Natural killer cell (primary cell): ENCODE measurements at regions of chr1 and their contacts with region 1.

Region 1: DNA sequence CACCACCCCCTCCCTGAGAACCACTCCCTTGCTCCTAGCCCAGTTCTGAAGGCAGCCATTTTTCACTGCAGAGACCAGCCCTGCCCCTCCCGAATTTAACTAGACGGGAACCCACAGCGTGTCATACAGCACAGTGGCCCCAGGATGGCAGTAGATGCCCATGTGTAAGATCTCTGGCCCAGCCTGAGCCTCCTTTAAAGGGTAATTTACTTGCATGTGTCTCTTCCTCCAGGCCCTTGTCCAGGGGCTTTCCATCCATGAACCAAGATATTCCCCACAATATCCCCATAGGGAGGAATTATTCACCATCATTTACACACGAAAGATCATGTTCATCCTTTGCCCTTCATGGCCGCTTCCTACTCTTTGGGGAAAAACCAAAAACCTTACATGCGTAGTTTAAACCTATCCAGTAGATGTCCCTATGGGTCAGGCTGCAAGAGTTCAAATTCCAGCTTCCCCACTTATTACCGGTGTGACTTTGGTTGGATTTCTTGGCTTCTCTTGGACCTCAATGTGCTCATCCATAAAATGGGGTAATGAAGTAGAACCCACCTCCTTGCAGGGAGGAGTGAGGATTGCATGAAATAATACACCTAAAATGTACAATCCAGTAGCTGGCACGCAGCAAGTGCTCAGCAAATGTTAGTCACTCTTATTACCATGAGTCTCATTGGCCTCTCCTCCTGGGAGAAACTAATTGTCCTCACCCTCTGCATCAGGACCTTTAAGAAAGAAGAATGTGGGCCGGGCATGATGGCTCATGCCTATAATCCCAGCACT is 4.0 kb upstream of the LACTBL1 start:
- DNase-seq: peak; percentile 35 to 69
- ATAC-seq: peak; percentile 72 to 98 (median 96)
- H3K4me3 ChIP-seq: no peak overlapping the region
- H3K4me3 Mint-ChIP-seq: no peak overlapping the region
- H3K27ac ChIP-seq: no peak overlapping the region
- H3K27ac Mint-ChIP-seq: no peak overlapping the region
- H3K4me1 ChIP-seq: no peaks in the 10 kb centered on the region
- H3K4me1 Mint-ChIP-seq: no peaks in the 10 kb centered on the region
- H3K27me3 ChIP-seq: peaks cover 2% of the 10 kb centered on the region
- H3K27me3 Mint-ChIP-seq: peaks cover 15 to 28% of the 10 kb centered on the region in 2 donors
- CTCF ChIP-seq: no peak

Region 2: DNA sequence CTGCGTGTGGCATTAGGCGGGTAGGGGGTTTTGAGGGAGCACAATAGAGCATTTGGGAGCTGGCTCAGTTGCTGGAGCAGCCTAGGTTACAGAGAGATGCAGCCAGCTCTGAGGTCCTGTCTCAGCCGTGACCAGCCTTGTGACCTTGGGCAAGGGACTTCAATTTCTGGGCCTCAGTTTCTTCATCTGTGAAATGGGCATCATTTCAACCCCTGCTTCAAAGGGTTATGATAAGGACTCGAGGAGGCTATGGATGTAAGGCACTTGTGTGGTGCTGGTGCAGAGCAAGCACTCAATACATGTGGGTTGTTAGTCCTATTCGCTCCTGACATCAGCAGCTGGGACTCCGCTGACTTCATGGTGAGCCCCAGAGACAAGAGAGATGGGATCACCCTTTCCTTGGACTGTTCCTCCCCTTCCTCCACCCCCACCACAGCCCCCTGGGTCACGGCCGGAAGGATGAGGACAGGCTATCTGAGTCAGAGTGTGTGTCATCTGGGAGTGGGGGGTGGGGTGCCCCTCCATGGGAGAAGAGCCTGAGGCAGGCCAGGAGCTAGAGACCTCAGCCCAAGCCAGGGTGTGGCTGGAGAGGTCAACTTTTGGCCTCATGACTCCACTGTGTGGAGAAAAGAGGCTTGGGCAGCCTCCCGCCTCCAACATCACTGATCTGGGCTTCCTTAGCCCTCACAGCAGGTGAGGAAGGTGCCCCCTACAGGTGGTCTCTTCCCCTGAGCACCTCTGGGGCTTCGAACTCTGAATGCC is 596.4 kb before region 1 on chr1:
- intact Hi-C with region 1: no loop called
- DNase-seq: no peak
- ATAC-seq: no peak
- H3K4me3 ChIP-seq: no peak overlapping the region
- H3K4me3 Mint-ChIP-seq: no peak overlapping the region
- H3K27ac ChIP-seq: no peak overlapping the region
- H3K27ac Mint-ChIP-seq: no peak overlapping the region
- H3K4me1 ChIP-seq: no peaks in the 10 kb centered on the region
- H3K4me1 Mint-ChIP-seq: no peaks in the 10 kb centered on the region
- H3K27me3 ChIP-seq: no peaks in the 10 kb centered on the region
- H3K27me3 Mint-ChIP-seq: peaks cover 5 to 16% of the 10 kb centered on the region in 2 donors
- CTCF ChIP-seq: no peak

Region 3: GRCh38 chr1:23035823-23036452 is 59.3 kb after region 1 on chr1:
- intact Hi-C with region 1: no loop called
- DNase-seq: no peak
- ATAC-seq: no peak
- H3K4me3 ChIP-seq: no peak overlapping the region
- H3K4me3 Mint-ChIP-seq: no peak overlapping the region
- H3K27ac ChIP-seq: no peak overlapping the region
- H3K27ac Mint-ChIP-seq: no peak overlapping the region
- H3K4me1 ChIP-seq: no peaks in the 10 kb centered on the region
- H3K4me1 Mint-ChIP-seq: peaks cover 18 to 19% of the 10 kb centered on the region in 2 donors
- H3K27me3 ChIP-seq: no peaks in the 10 kb centered on the region
- H3K27me3 Mint-ChIP-seq: no peaks in the 10 kb centered on the region
- CTCF ChIP-seq: no peak

Region 4: GRCh38 chr1:23403735-23404486 is 427.3 kb after region 1 on chr1:
- intact Hi-C with region 1: loop called (anchors 2 kb)
- DNase-seq: peak; percentile 74 to 86
- ATAC-seq: peak; percentile 80 to 96 (median 93)
- H3K4me3 ChIP-seq: no peak overlapping the region
- H3K4me3 Mint-ChIP-seq: no peak overlapping the region
- H3K27ac ChIP-seq: no peak overlapping the region
- H3K27ac Mint-ChIP-seq: no peak overlapping the region
- H3K4me1 ChIP-seq: peaks cover 6% of the 10 kb centered on the region
- H3K4me1 Mint-ChIP-seq: peaks cover 0 to 6% of the 10 kb centered on the region in 2 donors
- H3K27me3 ChIP-seq: no peaks in the 10 kb centered on the region
- H3K27me3 Mint-ChIP-seq: no peaks in the 10 kb centered on the region
- CTCF ChIP-seq: peak; percentile 86